Endothelial cell of umbilical vein (primary cell): ENCODE measurements at regions of chr6 and their contacts with region 1.

Region 1: GRCh38 chr6:75934643-75935472 is 137.6 kb downstream of the IMPG1 start:
- DNase-seq: peak; percentile 77
- H3K4me3 ChIP-seq: peak overlapping the region in 2 of 3 experiments; percentile 35 to 51
- H3K27ac ChIP-seq: no peak overlapping the region
- H3K4me1 ChIP-seq: peaks cover 4% of the 10 kb centered on the region
- H3K27me3 ChIP-seq: no peaks in the 10 kb centered on the region
- CTCF ChIP-seq: peak; percentile 68 to 75
- POLR2A ChIP-seq: no peak

Region 2: DNA sequence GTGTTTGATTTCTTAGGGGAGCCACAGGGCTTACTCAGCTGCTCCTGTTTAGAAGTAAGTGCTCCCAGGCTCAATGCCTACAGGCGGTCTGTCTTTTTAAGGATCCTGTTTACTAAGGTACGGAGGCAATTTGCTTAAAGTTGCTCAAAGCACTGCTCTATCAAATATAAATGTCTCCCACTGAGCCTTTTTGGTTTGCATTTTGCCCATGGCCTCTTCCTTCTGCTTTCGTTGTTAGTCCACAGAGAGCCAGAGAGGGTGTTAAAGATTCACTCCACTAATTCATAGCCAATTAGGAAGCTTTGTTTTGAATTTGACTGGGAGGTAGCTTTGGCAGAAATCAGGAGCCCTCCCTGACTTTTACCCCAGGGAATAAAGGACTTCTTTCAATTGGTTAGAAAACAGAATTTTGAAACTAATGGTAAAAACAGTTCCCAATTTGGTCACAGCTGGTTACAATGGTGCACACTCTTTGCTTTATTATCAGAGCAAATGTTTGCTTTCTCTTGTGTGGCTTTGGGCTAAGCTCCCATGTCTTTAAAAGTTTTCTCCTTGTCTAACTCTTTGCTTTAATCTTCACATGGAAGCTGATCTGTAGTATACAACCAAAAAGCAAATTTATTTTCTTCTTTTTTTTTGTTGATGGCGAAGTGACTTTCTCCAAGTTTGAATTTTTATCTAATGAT is 11.4 kb after region 1 on chr6:
- CTCF ChIA-PET with region 1: interaction called, 18 read pairs
- POLR2A ChIA-PET with region 1: no interaction called
- dilution Hi-C with region 1: no loop called
- intact Hi-C with region 1: no loop called
- DNase-seq: no peak
- H3K4me3 ChIP-seq: no peak overlapping the region
- H3K27ac ChIP-seq: no peak overlapping the region
- H3K4me1 ChIP-seq: no peaks in the 10 kb centered on the region
- H3K27me3 ChIP-seq: peaks cover 5 to 32% of the 10 kb centered on the region in 2 experiments
- CTCF ChIP-seq: no peak
- POLR2A ChIP-seq: no peak

Region 3: GRCh38 chr6:76351275-76351674 is 416.4 kb after region 1 on chr6:
- CTCF ChIA-PET with region 1: interaction called, 14 read pairs
- POLR2A ChIA-PET with region 1: no interaction called
- dilution Hi-C with region 1: no loop called
- intact Hi-C with region 1: no loop called
- DNase-seq: no peak
- H3K4me3 ChIP-seq: no peak overlapping the region
- H3K27ac ChIP-seq: no peak overlapping the region
- H3K4me1 ChIP-seq: no peaks in the 10 kb centered on the region
- H3K27me3 ChIP-seq: no peaks in the 10 kb centered on the region
- CTCF ChIP-seq: peak in 1 of 2 donors; percentile 14
- POLR2A ChIP-seq: no peak

Region 4: DNA sequence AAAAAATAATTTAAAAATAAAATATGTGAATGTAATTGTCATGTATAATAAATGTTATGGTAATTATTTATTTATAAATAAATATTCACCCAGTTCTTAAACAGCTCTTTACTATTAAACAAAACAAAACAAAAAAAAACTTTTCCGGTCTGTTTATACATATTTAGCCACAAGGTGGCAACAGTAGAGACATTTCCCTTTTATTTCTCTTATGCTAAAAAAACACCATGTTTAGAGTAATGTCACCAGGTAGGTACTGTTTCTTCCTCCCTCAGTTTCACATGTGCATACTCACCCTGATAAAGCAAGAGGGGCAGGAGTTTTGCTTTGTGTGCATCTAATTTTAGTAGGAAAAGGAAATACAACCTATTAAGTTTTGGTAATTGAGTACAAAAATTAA is 748.0 kb after region 1 on chr6:
- CTCF ChIA-PET with region 1: interaction called, 26 read pairs
- POLR2A ChIA-PET with region 1: no interaction called
- dilution Hi-C with region 1: no loop called
- intact Hi-C with region 1: no loop called
- DNase-seq: peak; percentile 40
- H3K4me3 ChIP-seq: no peak overlapping the region
- H3K27ac ChIP-seq: no peak overlapping the region
- H3K4me1 ChIP-seq: peaks cover 8% of the 10 kb centered on the region
- H3K27me3 ChIP-seq: no peaks in the 10 kb centered on the region
- CTCF ChIP-seq: peak in 1 of 2 donors; percentile 22
- POLR2A ChIP-seq: no peak

Region 5: GRCh38 chr6:76697585-76697984 is 762.7 kb after region 1 on chr6:
- CTCF ChIA-PET with region 1: no interaction called
- POLR2A ChIA-PET with region 1: no interaction called
- dilution Hi-C with region 1: no loop called
- intact Hi-C with region 1: loop called (anchors 5 kb)
- DNase-seq: peak; percentile 64
- H3K4me3 ChIP-seq: no peak overlapping the region
- H3K27ac ChIP-seq: no peak overlapping the region
- H3K4me1 ChIP-seq: peaks cover 9% of the 10 kb centered on the region
- H3K27me3 ChIP-seq: no peaks in the 10 kb centered on the region
- CTCF ChIP-seq: peak; percentile 18 to 30
- POLR2A ChIP-seq: no peak